ENCODE measurements at regions of chr6 and their contacts with region 1.

Region 1: DNA sequence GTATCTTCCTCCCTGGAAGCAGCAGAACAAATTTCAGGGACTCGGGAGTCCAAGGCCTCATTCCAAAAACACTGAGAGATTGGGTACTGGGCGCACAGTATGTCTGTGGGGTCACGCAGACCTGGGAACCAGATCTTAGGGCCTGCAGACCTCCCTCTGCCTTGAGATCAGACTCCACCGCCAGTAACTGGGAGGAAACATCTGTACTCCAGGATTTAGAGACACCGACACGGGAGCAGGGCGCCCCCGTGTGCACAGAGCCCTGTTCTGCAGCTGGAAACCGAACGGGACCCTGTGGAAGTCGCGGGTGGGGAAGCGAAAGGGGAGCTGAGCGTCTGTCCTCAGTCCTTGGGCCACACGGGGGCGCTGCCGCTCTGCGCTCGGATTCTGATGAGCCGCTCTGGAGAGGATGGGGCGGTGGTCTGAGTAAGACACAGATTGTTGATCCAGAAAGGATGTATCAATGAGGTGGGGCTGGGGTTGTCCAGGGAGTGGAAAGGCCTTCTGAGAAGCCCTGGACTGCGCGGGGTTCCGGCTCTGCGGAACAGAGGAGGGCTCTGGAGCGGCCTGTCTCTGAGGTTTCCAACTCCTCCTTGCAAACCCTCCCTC is 35.7 kb upstream of the HLA-E start:
- DNase-seq: peak; percentile 73 to 90 (median 81)
- ATAC-seq: peak; percentile 86
- H3K4me3 ChIP-seq: peak overlapping the region; percentile 43
- H3K4me3 Mint-ChIP-seq: peak overlapping the region; percentile 49 to 84 (median 73)
- H3K27ac ChIP-seq: no peak overlapping the region
- H3K27ac Mint-ChIP-seq: no peak overlapping the region
- H3K4me1 ChIP-seq: peaks cover 37 to 44% of the 10 kb centered on the region in 2 donors
- H3K4me1 Mint-ChIP-seq: peaks cover 23 to 56% (median 51%) of the 10 kb centered on the region in 7 donors
- H3K27me3 ChIP-seq: peaks cover 22 to 29% of the 10 kb centered on the region in 2 donors
- H3K27me3 Mint-ChIP-seq: peaks cover 67 to 91% (median 82%) of the 10 kb centered on the region in 5 donors

Region 2: GRCh38 chr6:30411515-30412207 is 42.0 kb before region 1 on chr6:
- CTCF ChIA-PET with region 1: interaction called, 4 read pairs
- POLR2A ChIA-PET with region 1: interaction called, 3 read pairs
- intact Hi-C with region 1: loop called (anchors 1 to 5 kb)
- DNase-seq: peak; percentile 26 to 63 (median 52)
- ATAC-seq: peak; percentile 73
- H3K4me3 ChIP-seq: no peak overlapping the region
- H3K4me3 Mint-ChIP-seq: peak overlapping the region; percentile 2 to 69 (median 52)
- H3K27ac ChIP-seq: no peak overlapping the region
- H3K27ac Mint-ChIP-seq: peak overlapping the region in 2 of 9 donors; percentile 53 to 76
- H3K4me1 ChIP-seq: peaks cover 3 to 5% of the 10 kb centered on the region in 2 donors
- H3K4me1 Mint-ChIP-seq: peaks cover 4 to 11% (median 8%) of the 10 kb centered on the region in 7 donors
- H3K27me3 ChIP-seq: peaks cover 0 to 7% of the 10 kb centered on the region in 2 donors
- H3K27me3 Mint-ChIP-seq: peaks cover 45 to 77% (median 66%) of the 10 kb centered on the region in 5 donors

Region 3: DNA sequence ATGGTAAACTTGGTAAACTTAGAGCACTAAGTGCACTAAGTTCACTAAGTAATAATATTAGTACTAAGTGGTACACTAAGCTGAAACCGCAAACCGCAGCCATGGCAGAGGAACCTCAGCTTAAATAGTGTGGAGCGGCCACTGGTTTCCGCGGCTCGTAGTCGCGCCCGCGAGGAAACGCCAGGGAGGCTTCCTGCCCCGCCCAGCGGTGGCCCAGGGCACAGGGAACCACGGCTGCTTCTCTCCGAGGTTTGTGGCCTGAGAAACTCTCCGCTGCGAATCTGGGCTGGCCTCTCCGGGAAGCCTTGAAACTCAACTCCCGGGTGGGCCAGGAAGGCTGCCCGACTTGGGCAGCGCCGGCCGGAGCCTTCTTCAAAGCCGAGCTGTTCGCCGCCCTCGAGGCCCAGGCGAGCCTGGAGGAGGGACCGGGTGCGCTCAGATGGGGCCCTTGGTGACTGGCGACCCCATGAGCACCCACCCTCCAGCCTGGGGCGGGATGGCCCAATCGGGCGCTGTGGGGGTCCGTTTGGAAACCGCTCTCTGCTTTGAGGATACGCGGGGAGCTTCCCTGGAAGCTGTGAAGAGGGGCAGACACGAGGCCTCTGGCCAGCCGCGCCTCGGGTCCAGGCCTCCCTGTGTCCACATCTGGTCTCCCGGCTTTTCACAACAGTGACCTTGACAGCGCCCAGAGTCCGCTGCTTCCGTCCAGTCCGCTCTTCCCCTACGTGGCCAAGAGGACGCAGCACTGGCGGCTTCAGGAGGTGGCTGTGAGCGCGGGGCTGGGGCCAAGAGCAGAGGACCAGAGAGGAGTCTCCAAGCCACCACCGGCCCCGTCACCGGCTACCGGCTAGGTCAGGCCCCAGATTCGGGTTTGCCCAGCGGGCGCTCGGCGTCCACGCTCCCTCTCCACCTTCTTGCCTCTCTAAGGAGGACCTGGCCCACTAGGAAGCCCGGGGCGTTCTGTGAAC is 10.3 kb after region 1 on chr6:
- CTCF ChIA-PET with region 1: interaction called, 10 read pairs
- POLR2A ChIA-PET with region 1: interaction called, 15 read pairs
- intact Hi-C with region 1: loop called (anchors 1 to 2 kb)
- DNase-seq: peak in 8 of 9 donors; percentile 26 to 61 (median 44)
- ATAC-seq: peak; percentile 78
- H3K4me3 ChIP-seq: peak overlapping the region; percentile 22
- H3K4me3 Mint-ChIP-seq: peak overlapping the region in 8 of 10 donors; percentile 30 to 94 (median 47)
- H3K27ac ChIP-seq: no peak overlapping the region
- H3K27ac Mint-ChIP-seq: no peak overlapping the region
- H3K4me1 ChIP-seq: peaks cover 39 to 52% of the 10 kb centered on the region in 2 donors
- H3K4me1 Mint-ChIP-seq: peaks cover 20 to 53% (median 44%) of the 10 kb centered on the region in 7 donors
- H3K27me3 ChIP-seq: peaks cover 52% of the 10 kb centered on the region in 2 donors
- H3K27me3 Mint-ChIP-seq: peaks cover 82 to 91% (median 86%) of the 10 kb centered on the region in 5 donors

Region 4: GRCh38 chr6:30656513-30656912 is 202.9 kb after region 1 on chr6:
- CTCF ChIA-PET with region 1: no interaction called
- POLR2A ChIA-PET with region 1: no interaction called
- intact Hi-C with region 1: no loop called
- DNase-seq: no peak
- ATAC-seq: peak; percentile 78
- H3K4me3 ChIP-seq: no peak overlapping the region
- H3K4me3 Mint-ChIP-seq: no peak overlapping the region
- H3K27ac ChIP-seq: peak overlapping the region; percentile 4
- H3K27ac Mint-ChIP-seq: peak overlapping the region in 2 of 9 donors; percentile 53 to 77
- H3K4me1 ChIP-seq: no peaks in the 10 kb centered on the region
- H3K4me1 Mint-ChIP-seq: peaks cover 0 to 4% (median 0%) of the 10 kb centered on the region in 7 donors
- H3K27me3 ChIP-seq: no peaks in the 10 kb centered on the region
- H3K27me3 Mint-ChIP-seq: no peaks in the 10 kb centered on the region

Region 5: GRCh38 chr6:30672445-30673253 is 219.0 kb after region 1 on chr6 and contains the start of gene DHX16:
- CTCF ChIA-PET with region 1: interaction called, 3 read pairs
- POLR2A ChIA-PET with region 1: no interaction called
- intact Hi-C with region 1: loop called in 1 of 2 experiments (anchors 10 kb)
- DNase-seq: peak; percentile 65 to 85 (median 83)
- ATAC-seq: peak; percentile 93
- H3K4me3 ChIP-seq: peak within 1 kb of the TSS; percentile 74
- H3K4me3 Mint-ChIP-seq: peak within 1 kb of the TSS; percentile 87 to 94 (median 91)
- H3K27ac ChIP-seq: peak within 1 kb of the TSS; percentile 77
- H3K27ac Mint-ChIP-seq: peak within 1 kb of the TSS; percentile 70 to 93 (median 91)
- H3K4me1 ChIP-seq: peaks cover 8 to 15% of the 10 kb centered on the region in 2 donors
- H3K4me1 Mint-ChIP-seq: peaks cover 28 to 46% (median 43%) of the 10 kb centered on the region in 7 donors
- H3K27me3 ChIP-seq: no peaks in the 10 kb centered on the region
- H3K27me3 Mint-ChIP-seq: no peaks in the 10 kb centered on the region
- total RNA-seq, gene DHX16: 25.9 to 51.5 (median 46.7) TPM

Region 6: DNA sequence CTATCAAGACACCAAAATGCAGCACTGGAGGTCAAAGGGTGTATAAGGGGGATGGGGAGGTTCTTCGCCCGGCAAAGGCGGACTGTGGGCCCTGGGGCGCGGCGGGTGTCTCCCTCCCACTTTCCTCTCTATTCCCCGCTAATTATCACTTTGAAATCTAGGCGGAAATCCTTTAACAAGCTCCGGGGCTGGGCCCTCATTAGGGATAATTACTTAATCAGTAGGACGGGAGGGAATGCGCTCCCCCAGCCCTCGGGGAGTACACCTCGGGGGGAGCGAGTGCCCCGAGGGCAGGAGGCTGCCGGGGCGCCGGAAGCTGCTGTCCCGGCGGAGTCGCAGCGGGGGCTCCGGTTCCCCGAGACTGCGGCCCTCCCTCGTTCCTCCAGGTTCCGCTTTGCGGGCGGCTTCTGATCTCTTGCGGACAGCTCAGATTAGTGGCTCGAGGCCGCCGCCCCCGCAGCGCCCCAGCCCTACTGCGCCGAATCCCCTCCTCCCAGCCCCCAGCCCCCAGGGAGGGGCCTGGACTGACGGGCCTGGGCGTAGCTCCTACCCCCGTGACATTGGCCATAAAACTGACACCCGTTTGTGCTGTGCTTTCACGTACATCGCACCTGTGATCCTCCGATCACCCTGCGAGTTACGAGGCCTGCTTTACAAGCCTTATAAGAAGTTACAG is 501.9 kb after region 1 on chr6:
- CTCF ChIA-PET with region 1: no interaction called
- POLR2A ChIA-PET with region 1: no interaction called
- intact Hi-C with region 1: no loop called
- DNase-seq: peak; percentile 49 to 76 (median 63)
- ATAC-seq: peak; percentile 84
- H3K4me3 ChIP-seq: peak overlapping the region; percentile 62
- H3K4me3 Mint-ChIP-seq: peak overlapping the region; percentile 59 to 92 (median 86)
- H3K27ac ChIP-seq: peak overlapping the region; percentile 50
- H3K27ac Mint-ChIP-seq: peak overlapping the region in 8 of 9 donors; percentile 77 to 93 (median 89)
- H3K4me1 ChIP-seq: peaks cover 5 to 12% of the 10 kb centered on the region in 2 donors
- H3K4me1 Mint-ChIP-seq: peaks cover 3 to 37% (median 27%) of the 10 kb centered on the region in 7 donors
- H3K27me3 ChIP-seq: no peaks in the 10 kb centered on the region
- H3K27me3 Mint-ChIP-seq: peaks cover 5 to 81% (median 7%) of the 10 kb centered on the region in 5 donors